ENCODE measurements at regions of chr16 and their contacts with region 1.

Region 1: GRCh38 chr16:75464130-75464918 is at the start of gene TMEM170A:
- DNase-seq: peak; percentile 99 to 100
- H3K4me3 ChIP-seq: peak within 1 kb of the TSS; percentile 100
- H3K4me3 Mint-ChIP-seq: peak within 1 kb of the TSS; percentile 84
- H3K27ac Mint-ChIP-seq: peak within 1 kb of the TSS; percentile 79
- H3K4me1 ChIP-seq: peaks cover 5% of the 10 kb centered on the region
- H3K4me1 Mint-ChIP-seq: peaks cover 12% of the 10 kb centered on the region
- H3K27me3 ChIP-seq: no peaks in the 10 kb centered on the region
- H3K27me3 Mint-ChIP-seq: no peaks in the 10 kb centered on the region
- CTCF ChIP-seq: peak; percentile 100
- total RNA-seq, gene TMEM170A: 57.4 and 63.6 TPM in 2 replicates

Region 2: GRCh38 chr16:75432828-75433731 is 31.2 kb before region 1 on chr16 and contains the start of gene CFDP1:
- CTCF ChIA-PET with region 1: interaction called, 15 read pairs
- POLR2A ChIA-PET with region 1: interaction called, 6 read pairs
- intact Hi-C with region 1: loop called (anchors 1 kb)
- DNase-seq: peak; percentile 96 to 97
- H3K4me3 ChIP-seq: peak within 1 kb of the TSS; percentile 81
- H3K4me3 Mint-ChIP-seq: peak within 1 kb of the TSS; percentile 81
- H3K27ac Mint-ChIP-seq: peak within 1 kb of the TSS; percentile 88
- H3K4me1 ChIP-seq: no peaks in the 10 kb centered on the region
- H3K4me1 Mint-ChIP-seq: peaks cover 14% of the 10 kb centered on the region
- H3K27me3 ChIP-seq: no peaks in the 10 kb centered on the region
- H3K27me3 Mint-ChIP-seq: no peaks in the 10 kb centered on the region
- CTCF ChIP-seq: peak in 1 of 2 experiments; percentile 13
- total RNA-seq, gene CFDP1: 71.6 and 77.6 TPM in 2 replicates

Region 3: GRCh38 chr16:75446416-75446815 is 17.9 kb before region 1 on chr16:
- CTCF ChIA-PET with region 1: no interaction called
- POLR2A ChIA-PET with region 1: no interaction called
- intact Hi-C with region 1: loop called (anchors 2 kb)
- DNase-seq: no peak
- H3K4me3 ChIP-seq: no peak overlapping the region
- H3K4me3 Mint-ChIP-seq: no peak overlapping the region
- H3K27ac Mint-ChIP-seq: no peak overlapping the region
- H3K4me1 ChIP-seq: no peaks in the 10 kb centered on the region
- H3K4me1 Mint-ChIP-seq: no peaks in the 10 kb centered on the region
- H3K27me3 ChIP-seq: no peaks in the 10 kb centered on the region
- H3K27me3 Mint-ChIP-seq: no peaks in the 10 kb centered on the region
- CTCF ChIP-seq: no peak

Region 4: DNA sequence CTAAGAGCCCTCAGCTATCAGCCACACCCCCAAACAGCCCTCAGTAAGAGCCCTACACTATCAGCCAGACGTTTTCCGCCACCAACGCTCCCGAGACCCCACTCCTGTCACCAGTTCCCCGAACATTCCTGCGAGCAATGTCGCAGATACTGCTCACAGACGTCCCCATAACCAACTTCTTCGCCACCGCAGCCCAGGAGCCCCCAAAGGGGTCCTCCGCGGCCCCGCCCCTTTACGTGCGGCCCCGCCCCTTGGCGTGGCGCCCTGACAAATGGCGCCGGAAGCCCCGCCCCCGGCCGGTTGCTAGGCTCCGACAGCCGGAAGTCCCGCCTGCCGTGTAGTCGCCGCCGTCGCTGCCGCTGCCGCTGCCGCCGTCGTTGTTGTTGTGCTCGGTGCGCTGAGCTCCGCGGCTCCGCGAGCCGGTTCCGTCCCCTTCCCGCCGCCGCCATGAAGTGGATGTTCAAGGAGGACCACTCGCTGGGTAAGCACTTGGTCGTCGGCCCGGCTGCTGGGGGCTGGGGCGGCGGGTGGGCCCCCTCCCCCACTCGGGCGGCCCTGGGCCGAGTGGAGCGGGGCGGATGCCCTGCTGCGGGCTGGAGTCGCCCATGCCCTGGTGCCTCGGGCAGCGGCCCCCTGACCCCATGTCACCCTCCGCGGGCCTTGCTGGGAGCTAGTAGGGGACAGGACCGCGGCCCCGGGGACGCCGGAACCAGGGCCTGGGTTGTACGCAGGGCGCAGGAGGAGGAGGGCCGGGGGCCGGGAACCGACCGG is 101.9 kb after region 1 on chr16 and contains the start of gene GABARAPL2:
- CTCF ChIA-PET with region 1: no interaction called
- POLR2A ChIA-PET with region 1: no interaction called
- intact Hi-C with region 1: loop called (anchors 1 kb)
- DNase-seq: peak; percentile 88 to 95
- H3K4me3 ChIP-seq: peak within 1 kb of the TSS; percentile 44
- H3K4me3 Mint-ChIP-seq: peak within 1 kb of the TSS; percentile 85
- H3K27ac Mint-ChIP-seq: peak within 1 kb of the TSS; percentile 58
- H3K4me1 ChIP-seq: 0 out of 2 replicates have a peak, but pooled peaks cover 10% of the 10 kb centered on the region
- H3K4me1 Mint-ChIP-seq: no peaks in the 10 kb centered on the region
- H3K27me3 ChIP-seq: no peaks in the 10 kb centered on the region
- H3K27me3 Mint-ChIP-seq: peaks cover 10% of the 10 kb centered on the region
- CTCF ChIP-seq: no peak
- total RNA-seq, gene GABARAPL2: 82.6 and 88.2 TPM in 2 replicates